ENCODE measurements at regions of chr10 and their contacts with region 1.

Region 1: GRCh38 chr10:117216611-117217195 is 19.4 kb downstream of the KCNK18 start:
- DNase-seq: peak; percentile 59
- H3K4me3 Mint-ChIP-seq: peak overlapping the region; percentile 75
- H3K27ac Mint-ChIP-seq: no peak overlapping the region
- H3K4me1 Mint-ChIP-seq: peaks cover 4% of the 10 kb centered on the region
- H3K27me3 Mint-ChIP-seq: peaks cover 29% of the 10 kb centered on the region

Region 2: DNA sequence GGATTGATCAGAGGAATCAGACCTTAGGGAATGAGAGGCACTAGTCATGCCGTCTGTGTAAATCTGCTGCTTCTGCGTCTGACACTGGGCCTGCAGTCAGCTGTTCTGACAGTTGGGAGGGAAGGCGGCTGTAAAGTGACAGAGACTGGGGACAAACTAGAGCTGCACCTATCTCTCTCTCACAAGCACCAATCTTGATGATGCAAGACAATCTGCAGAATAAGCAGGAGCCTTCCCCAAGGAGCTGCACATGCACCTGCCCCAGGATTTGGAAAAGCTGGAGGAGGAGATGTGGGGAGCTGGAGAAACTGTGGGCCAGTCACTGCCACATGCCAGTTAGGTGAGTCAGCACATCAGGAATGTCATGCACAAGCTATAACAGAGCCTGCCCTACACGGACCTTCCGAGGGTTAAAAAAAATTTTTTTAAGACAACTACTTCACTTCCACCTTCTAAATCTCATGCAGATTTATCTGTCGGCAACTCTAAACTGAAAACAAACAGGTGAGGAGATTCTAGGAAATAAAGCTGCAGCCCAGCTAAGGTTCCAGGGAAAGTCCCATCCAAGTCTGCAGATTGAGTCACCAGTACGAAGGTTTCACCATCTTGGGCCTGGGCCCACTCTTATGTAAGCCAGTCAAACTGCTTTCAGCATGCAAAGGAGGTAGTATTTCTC is 328.2 kb before region 1 on chr10:
- intact Hi-C with region 1: no loop called
- DNase-seq: no peak
- H3K4me3 Mint-ChIP-seq: no peak overlapping the region
- H3K27ac Mint-ChIP-seq: no peak overlapping the region
- H3K4me1 Mint-ChIP-seq: no peaks in the 10 kb centered on the region
- H3K27me3 Mint-ChIP-seq: peaks cover 15% of the 10 kb centered on the region

Region 3: GRCh38 chr10:117237401-117237991 is 20.8 kb after region 1 on chr10:
- intact Hi-C with region 1: no loop called
- DNase-seq: no peak
- H3K4me3 Mint-ChIP-seq: no peak overlapping the region
- H3K27ac Mint-ChIP-seq: no peak overlapping the region
- H3K4me1 Mint-ChIP-seq: no peaks in the 10 kb centered on the region
- H3K27me3 Mint-ChIP-seq: peaks cover 40% of the 10 kb centered on the region

Region 4: DNA sequence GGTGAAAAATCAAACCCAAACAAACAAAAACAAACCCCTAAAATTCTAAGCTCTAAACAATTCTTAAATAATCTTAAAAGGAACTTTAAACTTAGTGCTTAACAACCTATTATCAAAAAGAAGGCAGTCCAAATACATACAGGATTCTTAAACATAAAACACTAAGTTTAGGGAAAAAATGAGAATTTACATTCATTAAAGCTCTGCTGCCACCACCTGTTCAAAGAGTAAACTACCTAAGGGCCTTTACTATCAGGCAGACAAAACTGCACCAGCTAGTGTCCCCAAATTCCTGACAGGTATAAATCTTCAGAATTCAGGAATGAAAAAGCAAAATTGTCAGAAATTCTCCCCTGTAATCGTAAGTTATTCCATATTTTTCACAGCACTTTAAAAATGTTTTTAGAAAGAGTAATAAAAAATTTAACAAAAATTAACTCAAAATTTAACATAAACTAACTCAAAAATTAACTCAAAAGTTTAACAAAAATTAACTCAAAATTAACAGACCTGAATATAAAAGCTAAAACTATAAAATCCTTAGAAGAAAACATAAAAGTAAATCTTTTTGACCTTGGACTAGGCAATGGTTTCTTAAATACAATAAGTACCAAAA is 103.5 kb after region 1 on chr10:
- intact Hi-C with region 1: loop called (anchors 1 kb)
- DNase-seq: no peak
- H3K4me3 Mint-ChIP-seq: no peak overlapping the region
- H3K27ac Mint-ChIP-seq: no peak overlapping the region
- H3K4me1 Mint-ChIP-seq: no peaks in the 10 kb centered on the region
- H3K27me3 Mint-ChIP-seq: no peaks in the 10 kb centered on the region

Region 5: GRCh38 chr10:117431160-117431559 is 214.5 kb after region 1 on chr10:
- intact Hi-C with region 1: no loop called
- DNase-seq: no peak
- H3K4me3 Mint-ChIP-seq: no peak overlapping the region
- H3K27ac Mint-ChIP-seq: no peak overlapping the region
- H3K4me1 Mint-ChIP-seq: no peaks in the 10 kb centered on the region
- H3K27me3 Mint-ChIP-seq: peaks cover 2% of the 10 kb centered on the region